ENCODE measurements at regions of chr1 and their contacts with region 1.

Region 1: DNA sequence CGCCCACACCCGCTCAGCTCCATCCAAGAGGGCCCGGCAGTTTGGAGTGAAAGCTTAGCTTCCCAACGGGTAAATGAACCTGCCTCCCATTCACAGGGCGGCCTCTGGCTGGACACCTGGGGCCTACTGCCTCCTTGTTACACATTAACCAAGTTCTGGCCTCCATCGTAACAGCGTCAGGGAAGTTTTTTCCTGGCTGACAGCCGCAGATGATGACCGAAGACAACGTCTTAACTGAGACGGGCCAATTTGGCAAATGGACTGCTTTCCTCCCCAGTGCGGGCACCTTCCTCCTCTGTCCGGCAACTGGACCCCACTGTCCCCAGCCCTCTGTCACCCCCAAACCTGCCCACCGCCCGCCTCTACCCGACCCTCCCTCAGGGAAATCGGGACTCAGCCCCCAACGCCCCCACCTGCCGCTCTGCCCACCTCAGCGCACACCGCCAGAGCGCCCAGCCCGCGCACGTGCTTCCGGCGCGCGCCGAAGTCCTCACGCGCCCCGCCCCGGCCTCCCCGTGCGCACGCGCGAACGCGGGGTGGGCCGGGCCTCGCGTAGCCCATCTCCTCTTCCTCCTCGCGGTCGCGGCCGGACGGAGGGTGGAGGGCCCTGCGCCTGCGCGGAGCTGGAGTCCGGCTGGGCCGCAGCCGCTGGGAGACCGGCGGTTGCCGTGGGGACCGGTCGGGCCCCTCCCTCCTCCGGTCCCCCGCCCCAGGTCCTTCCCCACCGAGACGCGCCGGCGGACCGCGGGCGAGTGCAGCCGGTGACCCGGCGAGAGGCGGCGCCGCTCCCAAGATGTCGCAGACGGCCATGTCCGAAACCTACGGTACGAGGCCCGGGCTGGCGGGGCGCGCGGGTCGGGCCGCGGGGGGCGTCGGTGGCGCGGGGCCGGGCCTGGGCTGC is at the start of gene RAB4A:
- DNase-seq: peak; percentile 81
- H3K4me3 ChIP-seq: peak within 1 kb of the TSS; percentile 63 to 78 (median 77)
- H3K27ac ChIP-seq: peak within 1 kb of the TSS; percentile 76
- H3K4me1 ChIP-seq: peaks cover 40% of the 10 kb centered on the region
- H3K27me3 ChIP-seq: no peaks in the 10 kb centered on the region
- CTCF ChIP-seq: no peak
- total RNA-seq, gene RAB4A: 46.5 to 59.2 TPM

Region 2: DNA sequence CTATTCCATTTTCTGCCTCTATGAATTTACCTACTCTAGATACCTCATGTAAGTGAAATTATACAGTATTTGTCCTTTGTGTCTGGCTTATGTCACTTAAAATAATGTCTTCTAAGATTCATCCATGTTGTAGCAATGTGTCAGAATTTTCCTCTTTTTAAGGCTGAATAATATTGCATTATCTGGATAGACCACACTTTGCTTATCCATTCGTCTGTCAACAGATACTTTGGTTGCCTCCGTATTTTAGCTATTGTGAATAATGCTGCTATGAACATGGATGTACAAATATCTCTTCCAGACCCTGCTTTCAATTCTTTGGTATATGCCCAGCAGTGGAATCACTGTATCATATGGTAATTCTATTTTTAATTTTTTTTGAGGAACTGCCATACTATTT is 82.2 kb after region 1 on chr1:
- CTCF ChIA-PET with region 1: no interaction called
- dilution Hi-C with region 1: no loop called
- in situ Hi-C with region 1: no loop called
- intact Hi-C with region 1: no loop called
- DNase-seq: no peak
- H3K4me3 ChIP-seq: no peak overlapping the region
- H3K27ac ChIP-seq: no peak overlapping the region
- H3K4me1 ChIP-seq: no peaks in the 10 kb centered on the region
- H3K27me3 ChIP-seq: no peaks in the 10 kb centered on the region
- CTCF ChIP-seq: no peak

Region 3: GRCh38 chr1:229461032-229461668 is 190.4 kb after region 1 on chr1:
- CTCF ChIA-PET with region 1: no interaction called
- dilution Hi-C with region 1: no loop called
- in situ Hi-C with region 1: loop called in 1 of 2 experiments (anchors 10 kb)
- intact Hi-C with region 1: no loop called
- DNase-seq: no peak
- H3K4me3 ChIP-seq: no peak overlapping the region
- H3K27ac ChIP-seq: no peak overlapping the region
- H3K4me1 ChIP-seq: no peaks in the 10 kb centered on the region
- H3K27me3 ChIP-seq: no peaks in the 10 kb centered on the region
- CTCF ChIP-seq: no peak

Region 4: GRCh38 chr1:229479660-229480399 is 209.0 kb after region 1 on chr1:
- CTCF ChIA-PET with region 1: interaction called, 5 read pairs
- dilution Hi-C with region 1: loop called (anchors 25 kb)
- in situ Hi-C with region 1: no loop called
- intact Hi-C with region 1: no loop called
- DNase-seq: no peak
- H3K4me3 ChIP-seq: no peak overlapping the region
- H3K27ac ChIP-seq: no peak overlapping the region
- H3K4me1 ChIP-seq: no peaks in the 10 kb centered on the region
- H3K27me3 ChIP-seq: no peaks in the 10 kb centered on the region
- CTCF ChIP-seq: no peak

Region 5: DNA sequence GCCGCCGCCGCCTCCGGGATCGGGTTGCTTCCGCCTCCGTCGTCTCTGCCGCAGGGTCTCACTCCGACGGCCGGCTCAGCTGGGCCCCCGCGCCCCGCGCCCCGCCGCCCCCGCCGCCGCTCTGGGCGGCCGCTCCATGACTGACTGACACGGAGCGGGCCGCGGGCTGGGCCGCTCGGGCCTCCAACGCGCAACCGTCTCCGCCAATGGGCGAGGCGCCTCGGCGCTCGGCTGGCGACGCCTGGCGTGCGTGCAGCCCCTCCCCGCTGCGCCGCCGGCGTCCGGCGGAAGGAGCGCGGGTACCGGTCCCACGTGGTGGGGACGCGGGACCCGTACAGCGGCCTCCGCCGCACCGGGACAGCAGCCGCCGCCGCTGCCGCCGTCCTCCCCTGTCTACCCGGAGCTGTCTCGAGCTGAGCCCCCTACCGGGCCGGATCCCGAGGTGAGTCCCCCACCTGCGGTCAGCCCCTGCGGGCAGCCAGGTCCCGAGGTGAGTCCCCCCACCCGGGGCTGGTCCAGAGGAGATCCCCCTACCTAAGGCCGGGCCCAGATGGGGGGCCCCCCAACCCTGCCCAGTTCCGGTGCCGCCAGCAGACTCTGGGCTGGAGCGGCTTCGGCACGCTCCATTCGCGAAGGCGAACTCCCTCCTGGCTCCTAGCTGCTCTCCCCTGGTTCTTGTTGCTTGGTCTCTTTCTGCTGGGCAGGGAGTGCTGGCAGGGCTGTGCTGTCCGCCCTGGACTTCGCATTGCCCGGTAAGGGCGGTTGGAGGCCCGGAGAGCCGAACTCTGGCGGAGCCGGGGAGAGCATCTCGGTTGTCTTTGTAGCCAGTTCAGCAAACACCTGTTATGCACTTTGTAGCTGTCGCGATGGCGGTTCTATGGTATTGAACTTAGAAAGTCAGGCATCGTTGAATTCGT is 355.4 kb after region 1 on chr1 and contains the starts of genes TAF5L and URB2:
- CTCF ChIA-PET with region 1: no interaction called
- dilution Hi-C with region 1: no loop called
- in situ Hi-C with region 1: no loop called
- intact Hi-C with region 1: loop called (anchors 10 kb)
- DNase-seq: peak; percentile 90
- H3K4me3 ChIP-seq: peak within 1 kb of the TSS; percentile 92 to 98 (median 93)
- H3K27ac ChIP-seq: peak within 1 kb of the TSS; percentile 42
- H3K4me1 ChIP-seq: peaks cover 21% of the 10 kb centered on the region
- H3K27me3 ChIP-seq: no peaks in the 10 kb centered on the region
- CTCF ChIP-seq: no peak
- total RNA-seq, gene TAF5L: 20.8 to 21.0 TPM
- total RNA-seq, gene URB2: 13.3 to 15.4 TPM

Measured in mammary epithelial cell (primary cell).